Gastrocnemius medialis (tissue), 4 donors: ENCODE measurements at regions of chr17 and their contacts with region 1.

Region 1: GRCh38 chr17:9239793-9240658 is 218.7 kb downstream of the NTN1 start:
- DNase-seq: peak; percentile 49 to 81
- ATAC-seq: peak; percentile 73 to 74
- H3K4me3 ChIP-seq: peak overlapping the region; percentile 57 to 86 (median 68)
- H3K27ac ChIP-seq: peak overlapping the region; percentile 85 to 97 (median 88)
- H3K4me1 ChIP-seq: peaks cover 9 to 23% of the 10 kb centered on the region in 2 donors
- H3K27me3 ChIP-seq: no peaks in the 10 kb centered on the region
- CTCF ChIP-seq: no peak
- POLR2A ChIP-seq: peak; percentile 66 to 75

Region 2: DNA sequence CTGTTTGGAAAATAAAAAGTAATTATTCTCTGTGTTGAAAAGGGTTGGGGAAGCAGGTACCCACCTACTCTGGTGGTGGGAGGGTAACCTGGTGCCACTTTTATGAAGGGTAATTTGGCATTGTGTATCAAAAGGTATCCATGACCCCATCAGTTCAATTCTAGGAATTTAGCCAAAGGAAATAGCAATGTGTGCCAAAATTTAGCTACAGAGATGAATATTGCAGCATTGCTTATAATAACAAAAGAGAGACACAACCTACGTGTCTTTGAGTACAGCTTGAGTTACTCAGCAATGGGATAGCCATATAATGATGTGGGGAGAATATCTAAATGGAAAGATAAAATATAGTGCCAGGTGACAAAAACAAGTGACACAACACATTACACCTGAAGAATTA is 48.0 kb before region 1 on chr17:
- in situ Hi-C with region 1: no loop called
- intact Hi-C with region 1: no loop called
- DNase-seq: no peak
- ATAC-seq: no peak
- H3K4me3 ChIP-seq: no peak overlapping the region
- H3K27ac ChIP-seq: no peak overlapping the region
- H3K4me1 ChIP-seq: no peaks in the 10 kb centered on the region
- H3K27me3 ChIP-seq: no peaks in the 10 kb centered on the region
- CTCF ChIP-seq: no peak
- POLR2A ChIP-seq: no peak

Region 3: DNA sequence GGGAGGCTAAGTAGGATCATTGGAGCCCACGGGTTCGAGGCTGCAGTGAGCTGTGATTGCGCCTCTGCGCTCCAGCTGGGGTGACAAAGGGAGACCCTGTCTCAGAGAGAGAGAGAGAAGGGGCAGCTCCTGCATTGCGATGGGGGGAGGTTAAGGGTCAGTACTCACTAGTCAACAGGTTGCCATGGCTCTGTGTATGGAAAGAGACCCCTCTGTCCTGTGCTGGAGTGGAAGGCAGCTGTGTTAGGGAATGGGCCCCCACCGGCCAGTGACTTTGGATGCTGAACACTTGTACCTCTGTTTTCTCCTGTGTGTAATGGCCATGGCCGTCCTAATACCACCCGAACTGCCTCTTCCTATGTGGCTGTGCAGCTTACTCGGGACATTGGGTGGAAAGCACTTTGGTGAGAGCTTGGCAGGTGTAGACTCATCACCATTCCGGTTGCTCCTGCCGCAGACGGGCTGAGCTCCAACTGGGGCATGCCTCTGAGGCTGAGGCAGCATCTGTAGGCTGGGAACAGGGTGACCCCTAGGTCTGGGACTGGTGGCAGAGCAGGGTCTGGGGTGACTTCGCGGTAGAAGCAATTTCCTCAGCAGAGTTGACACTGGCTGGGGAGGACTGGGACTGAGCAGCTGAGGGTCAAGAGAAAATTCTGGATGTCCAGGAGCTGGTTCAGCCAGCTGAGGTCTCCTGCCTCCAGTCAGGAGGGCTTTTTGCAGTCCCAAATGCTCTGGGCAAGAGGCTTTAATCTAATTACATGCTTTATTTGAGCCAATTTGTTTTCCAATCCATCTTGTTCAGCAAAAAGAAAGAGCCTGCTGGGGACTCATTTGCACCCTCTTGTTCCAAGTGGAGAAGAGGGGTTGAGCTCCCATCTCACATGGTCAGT is 34.3 kb before region 1 on chr17:
- in situ Hi-C with region 1: no loop called
- intact Hi-C with region 1: no loop called
- DNase-seq: no peak
- ATAC-seq: no peak
- H3K4me3 ChIP-seq: no peak overlapping the region
- H3K27ac ChIP-seq: no peak overlapping the region
- H3K4me1 ChIP-seq: peaks cover 0 to 2% of the 10 kb centered on the region in 2 donors
- H3K27me3 ChIP-seq: no peaks in the 10 kb centered on the region
- CTCF ChIP-seq: no peak
- POLR2A ChIP-seq: no peak

Region 4: GRCh38 chr17:9419932-9420453 is 180.0 kb after region 1 on chr17:
- in situ Hi-C with region 1: no loop called
- intact Hi-C with region 1: loop called (anchors 5 kb)
- DNase-seq: no peak
- ATAC-seq: no peak
- H3K4me3 ChIP-seq: no peak overlapping the region
- H3K27ac ChIP-seq: no peak overlapping the region
- H3K4me1 ChIP-seq: peaks cover 5 to 7% of the 10 kb centered on the region in 2 donors
- H3K27me3 ChIP-seq: no peaks in the 10 kb centered on the region
- CTCF ChIP-seq: no peak
- POLR2A ChIP-seq: no peak

Region 5: DNA sequence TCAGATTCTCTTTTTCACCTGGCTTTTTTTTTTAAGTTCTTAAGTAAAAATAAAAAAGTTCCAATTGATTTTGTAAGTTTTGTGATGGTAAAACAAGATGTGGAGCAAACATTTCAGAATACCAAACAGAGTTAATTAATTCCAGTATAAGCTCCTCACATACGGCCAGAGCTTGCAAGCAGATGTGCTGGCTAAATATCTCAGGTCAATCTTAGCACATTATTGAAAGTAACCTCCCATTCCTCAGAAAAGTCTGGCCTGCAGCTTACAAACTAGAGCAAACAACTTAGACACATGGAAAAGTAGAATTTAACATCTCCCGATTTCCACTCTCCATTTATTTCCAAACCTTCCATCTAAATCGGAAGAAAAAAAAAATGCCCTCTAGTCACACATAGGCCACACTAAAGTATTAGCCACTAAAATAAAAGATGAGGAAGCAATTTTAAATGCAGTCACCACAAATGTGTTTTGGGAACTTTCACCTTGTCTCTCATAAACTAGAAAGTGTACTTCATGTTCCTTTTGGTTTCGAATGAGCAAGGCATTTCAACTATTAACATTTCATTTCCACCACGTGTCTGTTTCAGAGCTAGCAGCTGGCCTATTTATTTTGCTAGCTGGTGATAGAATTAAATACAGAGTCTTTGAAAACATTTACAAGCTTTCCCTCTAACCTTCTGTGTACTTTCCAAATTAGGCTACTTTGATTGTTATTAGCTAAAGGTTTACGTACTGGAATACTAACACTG is 192.3 kb after region 1 on chr17:
- in situ Hi-C with region 1: no loop called
- intact Hi-C with region 1: no loop called
- DNase-seq: no peak
- ATAC-seq: peak; percentile 32 to 79
- H3K4me3 ChIP-seq: no peak overlapping the region
- H3K27ac ChIP-seq: peak overlapping the region; percentile 34 to 75 (median 51)
- H3K4me1 ChIP-seq: peaks cover 31 to 32% of the 10 kb centered on the region in 2 donors
- H3K27me3 ChIP-seq: no peaks in the 10 kb centered on the region
- CTCF ChIP-seq: no peak
- POLR2A ChIP-seq: no peak